ENCODE measurements at regions of chr2 and their contacts with region 1.

Region 1: DNA sequence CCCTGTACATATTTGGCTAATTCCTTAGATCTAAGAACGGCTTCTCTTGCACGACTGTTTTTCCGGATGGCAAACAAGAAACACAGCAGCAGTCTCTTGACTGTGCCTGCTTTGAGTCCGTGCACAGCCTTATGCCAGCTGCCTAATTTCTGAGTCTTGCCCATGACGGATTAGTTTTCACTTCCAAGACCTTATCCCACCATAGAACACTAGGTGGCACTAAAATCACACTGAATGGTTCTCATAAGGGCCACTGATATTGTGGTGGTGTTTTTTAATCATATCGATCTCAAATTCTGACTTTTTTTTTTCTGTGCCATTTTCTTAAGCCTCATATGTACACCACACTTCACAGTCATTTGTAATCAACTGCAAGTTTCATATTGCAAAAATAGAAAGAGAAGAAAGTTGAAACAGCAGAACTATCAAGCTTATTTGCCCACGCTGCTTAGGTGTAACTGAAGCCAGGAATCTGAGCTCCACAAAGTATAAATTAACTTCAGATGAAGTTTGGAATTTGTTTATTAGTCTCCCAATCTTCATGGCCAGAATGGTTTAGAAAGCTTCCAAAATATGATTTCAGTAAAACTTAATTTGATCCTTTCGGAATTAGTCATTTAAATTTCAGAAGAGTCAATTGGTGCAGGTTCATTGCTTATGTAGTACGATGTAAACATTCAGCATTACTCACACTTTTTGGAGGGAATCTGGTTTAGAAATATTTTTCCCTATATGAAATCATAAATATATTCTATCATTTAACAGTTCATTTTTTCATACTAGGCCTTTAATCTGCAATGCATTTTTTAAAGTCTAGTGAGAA is 45.5 kb upstream of the SCN7A start:
- DNase-seq: peak; percentile 51
- ATAC-seq: peak; percentile 93
- H3K4me3 ChIP-seq: no peak overlapping the region
- H3K27ac ChIP-seq: no peak overlapping the region
- H3K4me1 ChIP-seq: no peaks in the 10 kb centered on the region
- H3K27me3 ChIP-seq: no peaks in the 10 kb centered on the region
- CTCF ChIP-seq: peak; percentile 51 to 79 (median 65); a peak in 5 of 6 replicates
- POLR2A ChIP-seq: no peak
- RAD21 ChIP-seq: peak; percentile 81

Region 2: GRCh38 chr2:165927353-165927752 is 612.2 kb before region 1 on chr2:
- CTCF ChIA-PET with region 1: no interaction called
- POLR2A ChIA-PET with region 1: no interaction called
- RAD21 ChIA-PET with region 1: no interaction called
- intact Hi-C with region 1: no loop called
- DNase-seq: no peak
- ATAC-seq: no peak
- H3K4me3 ChIP-seq: no peak overlapping the region
- H3K27ac ChIP-seq: no peak overlapping the region
- H3K4me1 ChIP-seq: no peaks in the 10 kb centered on the region
- H3K27me3 ChIP-seq: no peaks in the 10 kb centered on the region
- CTCF ChIP-seq: no peak
- POLR2A ChIP-seq: no peak
- RAD21 ChIP-seq: no peak

Region 3: DNA sequence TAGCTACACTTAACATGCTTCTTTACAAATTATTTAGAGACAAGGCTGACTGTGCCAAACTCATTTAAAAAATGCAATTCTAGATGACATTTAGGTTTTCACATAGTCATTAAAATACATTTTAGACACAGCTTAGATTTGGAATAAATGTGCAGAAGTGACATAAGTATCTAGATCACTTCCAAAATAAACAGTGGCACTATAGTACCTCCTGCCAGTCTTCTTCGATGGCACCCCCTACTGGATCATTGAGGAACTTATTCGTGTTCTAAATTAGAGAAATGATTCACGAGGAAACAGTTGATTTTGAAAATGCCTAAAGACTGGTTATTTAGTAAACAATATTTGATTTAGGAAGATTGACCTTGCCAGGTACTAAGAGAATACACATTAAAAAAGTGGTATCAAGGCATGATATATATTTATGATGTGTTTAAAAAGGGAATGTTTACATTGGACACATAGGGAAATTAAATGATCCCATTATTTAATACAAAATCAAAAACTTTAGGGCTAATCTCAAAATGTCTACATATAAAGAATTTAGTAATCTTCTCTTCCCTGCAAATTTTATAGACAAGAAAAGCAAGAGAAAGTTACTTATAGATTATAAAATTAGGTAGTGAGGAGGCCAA is 672.6 kb after region 1 on chr2:
- CTCF ChIA-PET with region 1: interaction called, 8 read pairs
- POLR2A ChIA-PET with region 1: no interaction called
- RAD21 ChIA-PET with region 1: no interaction called
- intact Hi-C with region 1: loop called (anchors 2 kb)
- DNase-seq: peak; percentile 10
- ATAC-seq: peak; percentile 58; the same call in 1 of the 2 replicates
- H3K4me3 ChIP-seq: no peak overlapping the region
- H3K27ac ChIP-seq: no peak overlapping the region
- H3K4me1 ChIP-seq: no peaks in the 10 kb centered on the region
- H3K27me3 ChIP-seq: no peaks in the 10 kb centered on the region
- CTCF ChIP-seq: peak; percentile 40 to 72 (median 59); a peak in 5 of 6 replicates
- POLR2A ChIP-seq: no peak
- RAD21 ChIP-seq: peak; percentile 47; the same call in 1 of the 2 replicates

Region 4: DNA sequence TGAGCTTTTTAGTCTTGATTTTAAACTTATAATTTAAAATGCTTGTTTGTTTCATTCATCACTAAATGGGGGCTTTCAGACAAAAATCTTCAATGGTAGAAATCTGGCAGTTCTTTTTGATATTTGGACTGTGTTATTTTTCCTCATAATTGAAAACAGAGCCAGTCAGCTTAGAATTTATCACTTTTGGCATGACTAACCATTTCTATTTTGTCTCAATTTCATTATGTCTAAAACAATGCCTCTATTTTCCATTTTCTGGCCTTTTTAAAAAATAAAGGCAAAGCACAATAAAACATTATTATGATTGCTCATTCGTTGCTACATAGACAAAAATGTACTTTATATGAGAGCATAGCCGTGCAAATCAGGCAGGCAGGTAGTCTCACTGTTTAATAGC is 783.2 kb after region 1 on chr2:
- CTCF ChIA-PET with region 1: no interaction called
- POLR2A ChIA-PET with region 1: no interaction called
- RAD21 ChIA-PET with region 1: no interaction called
- intact Hi-C with region 1: loop called (anchors 10 kb)
- DNase-seq: no peak
- ATAC-seq: no peak
- H3K4me3 ChIP-seq: no peak overlapping the region
- H3K27ac ChIP-seq: no peak overlapping the region
- H3K4me1 ChIP-seq: no peaks in the 10 kb centered on the region
- H3K27me3 ChIP-seq: no peaks in the 10 kb centered on the region
- CTCF ChIP-seq: no peak
- POLR2A ChIP-seq: no peak
- RAD21 ChIP-seq: no peak